ENCODE measurements at regions of chr1 and their contacts with region 1.

Region 1: DNA sequence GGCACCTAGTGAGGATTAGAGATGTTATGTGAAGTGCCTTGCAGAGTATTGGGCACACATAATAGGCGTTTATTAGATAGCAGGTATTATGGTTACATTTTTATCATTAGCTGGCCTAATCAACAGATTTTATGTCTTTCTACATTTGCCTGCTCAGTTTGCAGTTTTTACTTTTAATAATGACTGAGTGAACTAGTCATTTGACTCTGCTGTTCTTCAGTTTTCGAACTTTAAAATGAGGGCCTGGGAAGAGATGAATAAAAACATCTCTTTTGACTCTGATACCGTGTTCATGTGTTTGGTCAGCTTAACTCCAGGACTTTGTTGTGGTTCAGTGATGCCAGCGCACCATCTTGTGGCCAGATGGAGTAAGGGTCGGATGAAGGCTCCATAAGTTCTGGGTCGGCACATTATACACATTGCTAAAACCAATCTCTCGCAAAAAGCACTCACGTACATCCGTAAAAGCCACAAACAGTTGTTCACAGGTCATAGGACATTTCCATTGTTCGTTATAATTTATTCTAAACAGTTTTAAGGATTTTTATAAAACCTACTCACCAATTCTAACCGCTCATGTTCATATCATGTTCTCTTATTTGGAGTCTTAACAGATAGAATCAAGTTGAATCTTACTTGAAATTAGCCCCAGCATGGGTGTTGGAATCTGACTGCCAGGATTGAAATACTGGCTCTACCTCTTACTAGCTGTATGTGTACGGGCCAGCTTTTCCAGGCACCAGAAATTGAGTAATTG is 78.4 kb upstream of the GPR88 start:
- DNase-seq: peak; percentile 69 to 73
- ATAC-seq: peak; percentile 70 to 91 (median 88)
- H3K4me3 ChIP-seq: no peak overlapping the region
- H3K27ac ChIP-seq: no peak overlapping the region
- H3K4me1 ChIP-seq: peaks cover 0 to 24% (median 8%) of the 10 kb centered on the region in 9 donors
- H3K27me3 ChIP-seq: no peaks in the 10 kb centered on the region
- CTCF ChIP-seq: peak; percentile 74 to 93 (median 86)

Region 2: DNA sequence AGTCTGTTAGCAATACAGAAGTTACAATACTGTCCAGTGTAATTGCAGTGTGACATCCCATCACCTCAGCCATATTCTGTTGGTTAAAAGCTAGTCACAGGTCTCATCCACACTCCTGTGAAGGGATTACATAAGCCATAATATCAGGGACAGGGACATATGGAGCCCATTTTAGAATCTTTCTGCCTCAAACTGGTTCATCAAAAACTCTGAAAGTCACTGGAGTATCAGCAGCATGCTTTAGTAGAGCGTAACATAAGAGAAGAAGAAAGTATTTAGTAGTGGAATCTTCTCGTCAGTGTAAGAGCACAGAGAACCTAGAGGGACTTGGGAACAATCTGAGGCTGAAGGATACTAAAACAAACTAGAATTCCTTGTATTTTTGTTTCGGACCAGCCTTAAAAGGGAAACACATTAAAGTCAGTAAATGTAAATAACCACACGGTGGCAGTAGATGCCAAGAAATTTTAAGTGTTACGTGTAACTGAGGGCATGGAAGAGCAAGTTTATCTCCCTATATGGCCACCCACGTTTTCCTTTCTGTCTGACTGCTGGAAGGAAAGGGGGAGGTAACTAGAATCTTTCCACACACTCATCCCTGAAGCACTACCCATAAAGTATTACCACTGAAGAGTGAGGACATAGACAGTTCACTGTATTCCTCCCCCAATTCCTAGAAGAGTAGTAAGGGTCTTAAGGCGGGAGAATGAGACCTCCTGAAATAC is 651.0 kb before region 1 on chr1:
- intact Hi-C with region 1: loop called in 8 of 10 experiments (anchors 2 to 10 kb)
- DNase-seq: peak in 1 of 2 donors; percentile 54
- ATAC-seq: peak; percentile 87 to 96 (median 90)
- H3K4me3 ChIP-seq: peak overlapping the region in 4 of 10 donors; percentile 9 to 32 (median 16)
- H3K27ac ChIP-seq: peak overlapping the region in 4 of 10 donors; percentile 26 to 61 (median 45)
- H3K4me1 ChIP-seq: peaks cover 0 to 13% (median 6%) of the 10 kb centered on the region in 9 donors
- H3K27me3 ChIP-seq: peaks cover 0 to 10% (median 8%) of the 10 kb centered on the region in 7 donors
- CTCF ChIP-seq: peak; percentile 48 to 77 (median 71)

Region 3: DNA sequence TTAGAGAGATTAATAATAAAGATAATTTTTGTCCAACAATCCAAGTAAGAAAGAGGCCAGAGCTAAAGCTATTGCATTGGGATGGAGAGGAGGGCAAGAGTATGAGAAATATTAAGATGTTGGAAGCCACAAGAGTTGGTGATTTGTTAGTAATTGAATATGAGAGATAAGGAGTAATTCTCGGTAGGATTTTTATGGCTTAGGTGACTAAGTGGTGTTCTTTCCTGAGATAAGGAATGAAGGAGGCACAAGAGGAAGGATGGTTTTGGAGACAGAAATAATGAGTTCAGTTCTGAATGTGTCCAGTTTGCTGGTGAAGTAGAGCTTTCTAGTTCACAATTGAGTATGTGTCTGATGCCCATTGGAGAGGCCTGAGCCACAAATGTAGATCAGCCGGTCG is 317.2 kb before region 1 on chr1:
- intact Hi-C with region 1: loop called in 2 of 10 experiments (anchors 5 to 10 kb)
- DNase-seq: no peak
- ATAC-seq: no peak
- H3K4me3 ChIP-seq: no peak overlapping the region
- H3K27ac ChIP-seq: no peak overlapping the region
- H3K4me1 ChIP-seq: peaks cover 0 to 4% (median 0%) of the 10 kb centered on the region in 9 donors
- H3K27me3 ChIP-seq: no peaks in the 10 kb centered on the region
- CTCF ChIP-seq: no peak

Region 4: DNA sequence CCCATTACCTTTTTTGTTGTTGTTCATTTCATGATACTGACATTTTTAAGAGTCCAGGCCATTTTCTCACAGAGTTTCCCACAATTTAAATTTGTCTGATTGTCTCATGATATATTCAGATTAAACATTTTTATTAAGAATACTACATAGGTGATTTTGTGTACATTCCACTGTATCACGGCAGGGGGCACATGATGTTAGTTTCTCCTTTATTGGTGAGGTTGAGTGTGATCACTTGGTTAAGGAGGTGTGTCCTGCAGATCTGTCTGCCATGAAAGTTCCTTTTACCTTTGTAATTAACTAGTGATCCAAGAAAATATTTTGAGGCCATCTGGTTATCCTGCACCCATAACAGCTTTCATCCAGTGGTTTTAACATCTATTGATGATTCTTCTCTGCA is 181.7 kb before region 1 on chr1:
- intact Hi-C with region 1: loop called in 3 of 10 experiments (anchors 5 to 10 kb)
- DNase-seq: no peak
- ATAC-seq: no peak
- H3K4me3 ChIP-seq: no peak overlapping the region
- H3K27ac ChIP-seq: no peak overlapping the region
- H3K4me1 ChIP-seq: peaks cover 0 to 23% (median 9%) of the 10 kb centered on the region in 9 donors
- H3K27me3 ChIP-seq: no peaks in the 10 kb centered on the region
- CTCF ChIP-seq: no peak

Region 5: GRCh38 chr1:100351095-100351891 is 108.2 kb before region 1 on chr1:
- intact Hi-C with region 1: loop called in 5 of 10 experiments (anchors 5 to 10 kb)
- DNase-seq: peak; percentile 86 to 87
- ATAC-seq: peak; percentile 63 to 88 (median 83)
- H3K4me3 ChIP-seq: peak overlapping the region; percentile 67 to 97 (median 90)
- H3K27ac ChIP-seq: peak overlapping the region; percentile 57 to 95 (median 89)
- H3K4me1 ChIP-seq: peaks cover 3 to 36% (median 32%) of the 10 kb centered on the region in 9 donors
- H3K27me3 ChIP-seq: no peaks in the 10 kb centered on the region
- CTCF ChIP-seq: peak in 7 of 9 donors; percentile 33 to 63 (median 45)

Region 6: GRCh38 chr1:100584761-100585745 is 125.5 kb after region 1 on chr1:
- intact Hi-C with region 1: loop called in 2 of 10 experiments (anchors 5 to 10 kb)
- DNase-seq: no peak
- ATAC-seq: peak in 1 of 8 donors; percentile 11
- H3K4me3 ChIP-seq: no peak overlapping the region
- H3K27ac ChIP-seq: peak overlapping the region in 1 of 10 donors; percentile 36
- H3K4me1 ChIP-seq: peaks cover 0 to 30% (median 19%) of the 10 kb centered on the region in 9 donors
- H3K27me3 ChIP-seq: no peaks in the 10 kb centered on the region
- CTCF ChIP-seq: no peak

Region 7: GRCh38 chr1:100866041-100866900 is 406.7 kb after region 1 on chr1:
- intact Hi-C with region 1: loop called (anchors 1 to 5 kb)
- DNase-seq: no peak
- ATAC-seq: peak in 7 of 8 donors; percentile 57 to 75 (median 69)
- H3K4me3 ChIP-seq: peak overlapping the region in 1 of 10 donors; percentile 10
- H3K27ac ChIP-seq: no peak overlapping the region
- H3K4me1 ChIP-seq: peaks cover 0 to 11% (median 0%) of the 10 kb centered on the region in 9 donors
- H3K27me3 ChIP-seq: no peaks in the 10 kb centered on the region
- CTCF ChIP-seq: peak; percentile 45 to 78 (median 71)

Measured in heart right ventricle (tissue), 16 donors.